ENCODE measurements at regions of chr2 and their contacts with region 1.

Region 1: GRCh38 chr2:234544659-234545611 is 48.1 kb upstream of the ARL4C start:
- DNase-seq: no peak
- H3K4me3 ChIP-seq: no peak overlapping the region
- CTCF ChIP-seq: peak; percentile 92

Region 2: GRCh38 chr2:233982421-233983121 is 562.4 kb before region 1 on chr2:
- CTCF ChIA-PET with region 1: interaction called, 164 read pairs
- POLR2A ChIA-PET with region 1: no interaction called
- DNase-seq: peak; percentile 82
- H3K4me3 ChIP-seq: no peak overlapping the region
- CTCF ChIP-seq: no peak

Region 3: GRCh38 chr2:234135720-234136221 is 409.2 kb before region 1 on chr2:
- CTCF ChIA-PET with region 1: interaction called, 41 read pairs
- POLR2A ChIA-PET with region 1: no interaction called
- DNase-seq: peak; percentile 31
- H3K4me3 ChIP-seq: no peak overlapping the region
- CTCF ChIP-seq: peak; percentile 72

Region 4: GRCh38 chr2:234528410-234529148 is 16.4 kb before region 1 on chr2:
- CTCF ChIA-PET with region 1: interaction called, 45 read pairs
- POLR2A ChIA-PET with region 1: no interaction called
- DNase-seq: no peak
- H3K4me3 ChIP-seq: no peak overlapping the region
- CTCF ChIP-seq: no peak

Region 5: DNA sequence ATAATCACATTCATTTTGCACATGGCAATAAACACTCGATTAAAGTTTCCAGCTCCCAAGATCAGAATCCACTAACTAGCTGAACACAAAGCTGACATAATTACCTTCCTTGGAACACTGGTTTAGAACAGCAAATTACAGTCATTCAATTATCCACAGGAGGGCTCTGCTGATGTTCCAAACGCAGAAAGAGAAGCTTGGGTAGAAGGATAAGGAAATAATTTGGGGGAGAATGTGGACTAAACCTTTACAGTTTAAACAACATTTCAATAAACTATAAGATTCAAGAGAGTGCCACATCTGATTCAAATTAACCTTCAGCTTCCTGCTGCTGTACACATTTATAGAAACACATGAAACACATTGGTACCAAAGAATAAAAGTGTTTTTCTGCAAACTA is 19.8 kb after region 1 on chr2:
- CTCF ChIA-PET with region 1: interaction called, 10 read pairs
- POLR2A ChIA-PET with region 1: no interaction called
- DNase-seq: no peak
- H3K4me3 ChIP-seq: no peak overlapping the region
- CTCF ChIP-seq: peak; percentile 42

Region 6: DNA sequence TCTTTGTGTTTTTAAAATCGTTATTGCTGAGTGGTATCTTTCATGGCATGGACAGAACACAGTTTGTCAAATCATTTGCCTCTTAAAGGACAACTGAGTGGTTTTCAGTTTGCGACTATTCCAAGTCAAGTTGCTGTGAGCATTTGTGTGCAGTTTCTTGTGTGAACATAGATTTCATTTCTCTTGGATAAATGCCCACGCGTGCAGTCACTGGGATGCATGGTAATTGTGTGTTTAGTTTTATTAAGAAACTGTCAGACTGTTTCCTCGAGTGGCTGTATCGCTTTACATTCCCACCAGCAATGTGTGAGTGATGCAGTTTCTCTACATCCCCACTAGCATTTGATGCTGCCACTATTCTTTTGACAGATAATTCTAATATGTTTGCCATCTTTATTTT is 106.0 kb after region 1 on chr2:
- CTCF ChIA-PET with region 1: no interaction called
- POLR2A ChIA-PET with region 1: no interaction called
- DNase-seq: no peak
- H3K4me3 ChIP-seq: no peak overlapping the region
- CTCF ChIP-seq: no peak

Region 7: GRCh38 chr2:235129850-235130249 is 584.9 kb after region 1 on chr2:
- CTCF ChIA-PET with region 1: interaction called, 11 read pairs
- POLR2A ChIA-PET with region 1: no interaction called
- DNase-seq: no peak
- H3K4me3 ChIP-seq: no peak overlapping the region
- CTCF ChIP-seq: no peak

Measured in AG04449 (cell line).